Posterior vena cava (tissue), 2 donors: ENCODE measurements at regions of chr5 and their contacts with region 1.

Region 1: GRCh38 chr5:124408738-124409453 is 337.5 kb downstream of the ZNF608 start:
- DNase-seq: no peak

Region 2: DNA sequence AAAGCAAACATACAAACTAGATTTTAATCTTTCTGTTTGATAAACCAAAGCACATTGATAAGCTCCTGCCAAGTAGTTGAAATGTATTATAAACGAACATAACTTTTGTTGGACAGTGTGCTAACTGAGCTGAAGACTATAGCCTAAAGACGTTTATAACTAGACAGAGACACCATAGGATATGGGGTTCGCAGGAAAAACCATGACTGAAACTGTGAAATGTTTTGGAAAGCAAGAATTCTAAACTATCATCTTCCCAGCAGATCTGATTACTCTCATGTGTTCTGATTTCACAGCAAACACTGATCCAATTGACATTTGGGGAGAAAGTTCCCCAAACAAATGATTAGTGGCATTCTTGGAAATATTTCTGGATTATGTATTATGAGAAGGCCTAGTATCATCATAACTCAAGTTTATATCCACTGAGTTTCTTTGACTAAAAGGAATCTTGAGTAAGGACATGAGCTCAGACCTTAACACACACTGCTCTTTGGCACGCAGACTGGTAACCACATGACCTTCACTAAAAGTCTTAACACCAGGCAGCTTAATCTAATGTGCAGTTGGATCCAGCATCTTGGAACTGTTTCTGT is 37.7 kb before region 1 on chr5:
- intact Hi-C with region 1: loop called in 1 of 2 experiments (anchors 1 kb)
- DNase-seq: peak; percentile 85

Region 3: GRCh38 chr5:124783794-124784193 is 374.9 kb after region 1 on chr5:
- intact Hi-C with region 1: no loop called
- DNase-seq: no peak